Naive thymus-derived CD4-positive, alpha-beta T cell (primary cell): ENCODE measurements at regions of chr11 and their contacts with region 1.

Region 1: GRCh38 chr11:11798586-11799438 is 43.0 kb upstream of the USP47 start:
- DNase-seq: peak; percentile 41 to 79 (median 66)
- ATAC-seq: peak; percentile 79
- H3K4me3 ChIP-seq: no peak overlapping the region
- H3K4me3 Mint-ChIP-seq: no peak overlapping the region
- H3K27ac ChIP-seq: no peak overlapping the region
- H3K27ac Mint-ChIP-seq: no peak overlapping the region
- H3K4me1 ChIP-seq: no peaks in the 10 kb centered on the region
- H3K4me1 Mint-ChIP-seq: no peaks in the 10 kb centered on the region
- H3K27me3 ChIP-seq: peaks cover 0 to 3% of the 10 kb centered on the region in 2 donors
- H3K27me3 Mint-ChIP-seq: peaks cover 18 to 33% (median 24%) of the 10 kb centered on the region in 5 donors

Region 2: DNA sequence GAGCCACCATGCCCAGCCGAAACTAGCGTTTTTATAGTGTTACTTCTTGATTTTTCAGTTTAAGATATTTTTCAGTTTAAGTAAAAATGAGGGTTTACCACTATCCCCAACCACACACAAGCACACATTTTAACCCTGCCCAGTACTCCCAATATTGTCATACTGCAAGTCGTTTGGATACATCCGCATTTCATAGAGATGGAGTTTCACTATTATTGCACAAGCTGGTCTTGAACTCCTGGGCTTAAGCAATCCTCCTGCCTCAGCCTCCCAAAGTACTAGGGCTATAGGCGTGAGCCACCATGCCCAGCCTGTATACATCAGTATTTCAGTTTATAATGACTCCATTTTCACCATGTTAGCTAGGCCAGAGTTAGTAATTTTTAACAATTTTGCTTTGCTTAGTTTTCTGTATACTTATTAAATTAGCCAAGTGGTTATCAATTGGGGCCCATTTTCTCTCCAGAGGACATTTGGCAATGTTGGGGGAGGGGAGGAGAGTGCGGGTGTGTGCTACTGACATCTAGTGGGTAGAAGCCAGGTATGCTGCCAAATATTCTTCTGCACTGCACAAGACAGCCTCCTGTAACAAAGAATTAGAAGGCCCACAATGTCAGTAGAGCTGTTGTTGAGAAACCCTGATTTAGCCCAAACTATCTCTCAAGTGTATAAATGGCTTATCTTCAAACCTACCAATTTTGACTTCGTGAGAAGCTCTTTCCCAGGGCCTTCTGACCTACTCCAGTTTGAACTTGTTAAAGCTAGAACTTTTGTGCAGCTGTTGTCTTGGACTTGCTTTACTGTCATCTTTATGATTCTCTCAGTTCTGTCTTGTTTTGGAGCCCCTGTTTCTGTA is 50.3 kb after region 1 on chr11:
- CTCF ChIA-PET with region 1: interaction called, 36 read pairs
- POLR2A ChIA-PET with region 1: interaction called, 3 read pairs
- intact Hi-C with region 1: loop called (anchors 1 kb)
- DNase-seq: peak; percentile 24 to 76 (median 73)
- ATAC-seq: peak; percentile 98
- H3K4me3 ChIP-seq: peak overlapping the region; percentile 26
- H3K4me3 Mint-ChIP-seq: peak overlapping the region in 9 of 10 donors; percentile 47 to 79 (median 56)
- H3K27ac ChIP-seq: no peak overlapping the region
- H3K27ac Mint-ChIP-seq: peak overlapping the region in 8 of 9 donors; percentile 11 to 88 (median 72)
- H3K4me1 ChIP-seq: peaks cover 47 to 65% of the 10 kb centered on the region in 2 donors
- H3K4me1 Mint-ChIP-seq: peaks cover 53 to 75% (median 55%) of the 10 kb centered on the region in 7 donors
- H3K27me3 ChIP-seq: no peaks in the 10 kb centered on the region
- H3K27me3 Mint-ChIP-seq: no peaks in the 10 kb centered on the region

Region 3: DNA sequence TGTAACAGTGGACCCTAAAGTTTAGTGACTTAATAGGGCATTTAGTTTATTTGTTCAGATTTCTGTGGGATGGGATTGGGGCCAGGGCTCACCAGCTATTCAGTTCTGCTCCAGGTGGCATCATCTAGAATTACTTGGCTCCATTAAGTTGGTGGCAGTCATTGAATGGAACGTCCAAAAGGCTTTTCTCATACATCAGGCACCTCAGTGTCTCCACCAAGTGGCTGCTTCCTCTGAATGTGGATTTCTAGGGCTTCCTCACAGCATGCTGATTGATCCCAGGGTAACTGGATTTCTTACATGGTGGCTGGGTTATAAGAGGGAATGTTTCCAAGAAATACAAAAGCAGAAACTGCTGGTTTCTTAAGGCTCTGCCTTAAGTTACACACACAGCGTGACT is 77.6 kb after region 1 on chr11:
- CTCF ChIA-PET with region 1: interaction called, 4 read pairs
- POLR2A ChIA-PET with region 1: no interaction called
- intact Hi-C with region 1: loop called in 1 of 2 experiments (anchors 2 kb)
- DNase-seq: no peak
- ATAC-seq: no peak
- H3K4me3 ChIP-seq: no peak overlapping the region
- H3K4me3 Mint-ChIP-seq: peak overlapping the region in 1 of 10 donors; percentile 4
- H3K27ac ChIP-seq: no peak overlapping the region
- H3K27ac Mint-ChIP-seq: peak overlapping the region in 1 of 9 donors; percentile 47
- H3K4me1 ChIP-seq: peaks cover 6 to 8% of the 10 kb centered on the region in 2 donors
- H3K4me1 Mint-ChIP-seq: peaks cover 25 to 91% (median 66%) of the 10 kb centered on the region in 7 donors
- H3K27me3 ChIP-seq: no peaks in the 10 kb centered on the region
- H3K27me3 Mint-ChIP-seq: no peaks in the 10 kb centered on the region

Region 4: DNA sequence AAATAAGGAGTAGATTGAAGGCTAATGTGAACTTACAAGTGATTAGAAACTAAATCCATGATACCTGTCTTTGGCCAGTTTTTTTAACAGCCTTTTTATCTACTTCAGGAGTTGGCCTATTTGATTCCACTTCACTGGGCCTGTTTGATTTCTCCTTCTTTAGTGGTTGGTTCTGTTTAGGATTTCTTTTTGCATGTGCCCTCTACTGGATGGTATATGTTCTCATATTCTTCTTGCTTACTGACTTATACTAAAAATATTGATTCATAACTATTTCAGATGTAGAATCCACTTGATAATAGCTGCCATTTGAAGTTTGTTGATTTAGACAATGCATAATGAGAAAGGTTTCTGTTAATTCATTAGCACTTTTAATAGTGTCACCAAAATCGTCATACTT is 96.9 kb after region 1 on chr11:
- CTCF ChIA-PET with region 1: interaction called, 8 read pairs
- POLR2A ChIA-PET with region 1: no interaction called
- intact Hi-C with region 1: loop called in 1 of 2 experiments (anchors 1 kb)
- DNase-seq: no peak
- ATAC-seq: no peak
- H3K4me3 ChIP-seq: no peak overlapping the region
- H3K4me3 Mint-ChIP-seq: no peak overlapping the region
- H3K27ac ChIP-seq: no peak overlapping the region
- H3K27ac Mint-ChIP-seq: peak overlapping the region in 4 of 9 donors; percentile 40 to 84 (median 44)
- H3K4me1 ChIP-seq: no peaks in the 10 kb centered on the region
- H3K4me1 Mint-ChIP-seq: peaks cover 2 to 23% (median 8%) of the 10 kb centered on the region in 7 donors
- H3K27me3 ChIP-seq: no peaks in the 10 kb centered on the region
- H3K27me3 Mint-ChIP-seq: no peaks in the 10 kb centered on the region

Region 5: DNA sequence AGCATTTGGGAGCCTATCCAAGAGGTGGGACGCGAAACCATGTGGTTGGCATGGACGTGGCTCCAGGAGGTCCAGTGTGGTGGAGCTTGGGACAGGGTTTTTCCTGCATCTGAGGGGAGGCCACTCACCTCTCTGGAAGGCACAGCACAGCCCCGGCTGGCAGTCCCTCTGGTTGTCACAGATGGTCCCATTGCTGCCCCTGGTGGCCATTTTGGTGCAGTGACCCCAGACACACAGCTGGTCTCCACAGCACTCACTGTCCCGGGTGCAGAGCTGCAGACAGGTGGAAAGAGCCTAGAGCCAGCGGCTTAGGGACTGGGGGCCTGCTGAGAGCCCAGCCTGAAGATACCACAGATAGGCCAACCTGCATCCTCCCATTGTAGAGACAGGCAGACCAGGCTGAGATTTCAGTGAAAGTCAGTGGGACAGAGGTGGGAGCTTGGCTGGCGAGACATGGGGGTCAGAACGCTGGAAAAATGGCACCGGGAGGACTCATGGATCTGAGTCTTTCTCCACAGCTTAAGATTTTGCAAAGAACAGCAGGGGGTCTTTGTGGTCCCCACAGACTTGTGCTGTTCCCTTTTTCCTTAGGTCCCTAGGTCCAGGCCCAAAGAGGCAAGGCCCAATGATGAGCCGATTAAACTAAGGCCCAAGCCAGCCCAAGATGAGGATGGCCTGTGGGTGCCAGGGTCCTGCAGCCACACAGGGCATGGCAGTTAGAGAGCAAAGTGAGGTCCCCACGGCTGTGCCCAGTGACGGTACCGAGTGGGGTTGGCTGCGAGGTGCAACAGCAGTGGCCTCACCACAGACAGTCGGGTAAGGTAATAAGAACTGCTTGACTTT is 168.2 kb after region 1 on chr11:
- CTCF ChIA-PET with region 1: interaction called, 5 read pairs
- POLR2A ChIA-PET with region 1: no interaction called
- intact Hi-C with region 1: loop called (anchors 2 to 5 kb)
- DNase-seq: peak; percentile 36 to 65 (median 52)
- ATAC-seq: peak; percentile 86
- H3K4me3 ChIP-seq: no peak overlapping the region
- H3K4me3 Mint-ChIP-seq: no peak overlapping the region
- H3K27ac ChIP-seq: no peak overlapping the region
- H3K27ac Mint-ChIP-seq: no peak overlapping the region
- H3K4me1 ChIP-seq: peaks cover 4 to 5% of the 10 kb centered on the region in 2 donors
- H3K4me1 Mint-ChIP-seq: peaks cover 3 to 17% (median 8%) of the 10 kb centered on the region in 7 donors
- H3K27me3 ChIP-seq: no peaks in the 10 kb centered on the region
- H3K27me3 Mint-ChIP-seq: peaks cover 0 to 21% (median 0%) of the 10 kb centered on the region in 5 donors

Region 6: DNA sequence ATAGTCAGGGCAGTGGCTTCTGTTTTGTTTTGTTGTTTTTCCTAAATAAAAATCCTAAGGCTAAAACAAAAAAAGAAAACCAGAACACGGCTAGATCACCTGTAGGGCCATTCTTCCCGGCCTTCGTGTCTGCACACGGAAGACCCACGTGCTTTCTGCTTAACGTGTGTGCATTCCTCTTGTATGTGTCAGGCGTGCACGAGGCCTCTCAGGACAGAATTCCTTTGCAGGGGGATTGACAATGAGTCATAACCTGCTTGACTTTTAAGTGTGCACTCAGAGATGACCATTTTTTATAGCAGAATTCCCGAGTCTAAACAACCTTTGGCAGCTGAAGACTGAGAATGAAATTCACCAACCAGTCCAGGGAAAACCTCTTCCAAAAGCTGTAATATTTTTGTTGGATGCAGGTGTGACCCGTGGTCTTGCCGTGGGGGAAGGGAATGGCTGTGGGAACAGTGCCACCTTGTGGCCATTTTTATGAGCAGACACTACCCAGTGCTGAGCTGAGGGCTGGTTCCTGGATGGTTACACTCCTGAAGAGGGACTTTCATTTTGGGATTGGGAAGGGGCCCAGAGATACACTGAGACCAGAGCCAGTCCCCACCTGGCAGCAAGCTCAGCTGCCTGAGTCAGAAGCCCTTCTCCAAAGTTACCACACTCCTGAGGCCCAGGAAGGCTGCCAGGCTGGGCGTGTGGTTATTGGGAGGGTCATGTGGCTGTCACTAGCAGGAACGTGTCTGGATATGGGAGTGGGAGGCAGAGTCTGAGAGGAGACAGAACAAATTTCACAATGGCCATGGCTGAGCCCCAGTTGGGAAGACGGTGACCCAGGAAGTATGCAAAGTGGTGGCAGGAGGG is 245.4 kb after region 1 on chr11:
- CTCF ChIA-PET with region 1: interaction called, 20 read pairs
- POLR2A ChIA-PET with region 1: no interaction called
- intact Hi-C with region 1: loop called (anchors 1 kb)
- DNase-seq: peak; percentile 17 to 64 (median 44)
- ATAC-seq: peak; percentile 74
- H3K4me3 ChIP-seq: no peak overlapping the region
- H3K4me3 Mint-ChIP-seq: no peak overlapping the region
- H3K27ac ChIP-seq: no peak overlapping the region
- H3K27ac Mint-ChIP-seq: peak overlapping the region in 1 of 9 donors; percentile 58
- H3K4me1 ChIP-seq: peaks cover 0 to 3% of the 10 kb centered on the region in 2 donors
- H3K4me1 Mint-ChIP-seq: peaks cover 0 to 9% (median 0%) of the 10 kb centered on the region in 7 donors
- H3K27me3 ChIP-seq: no peaks in the 10 kb centered on the region
- H3K27me3 Mint-ChIP-seq: peaks cover 0 to 7% (median 0%) of the 10 kb centered on the region in 5 donors

Region 7: GRCh38 chr11:12281571-12282478 is 483.0 kb after region 1 on chr11:
- CTCF ChIA-PET with region 1: interaction called, 9 read pairs
- POLR2A ChIA-PET with region 1: no interaction called
- intact Hi-C with region 1: loop called (anchors 1 to 5 kb)
- DNase-seq: peak; percentile 57 to 81 (median 65)
- ATAC-seq: peak; percentile 79
- H3K4me3 ChIP-seq: no peak overlapping the region
- H3K4me3 Mint-ChIP-seq: no peak overlapping the region
- H3K27ac ChIP-seq: no peak overlapping the region
- H3K27ac Mint-ChIP-seq: no peak overlapping the region
- H3K4me1 ChIP-seq: no peaks in the 10 kb centered on the region
- H3K4me1 Mint-ChIP-seq: peaks cover 0 to 3% (median 0%) of the 10 kb centered on the region in 7 donors
- H3K27me3 ChIP-seq: no peaks in the 10 kb centered on the region
- H3K27me3 Mint-ChIP-seq: no peaks in the 10 kb centered on the region